Naive thymus-derived CD4-positive, alpha-beta T cell (primary cell): ENCODE measurements at regions of chr16 and their contacts with region 1.

Region 1: GRCh38 chr16:14310519-14310991 is 239.4 kb downstream of the MRTFB start:
- DNase-seq: no peak
- ATAC-seq: no peak
- H3K4me3 ChIP-seq: no peak overlapping the region
- H3K4me3 Mint-ChIP-seq: peak overlapping the region in 2 of 10 donors; percentile 77 to 86
- H3K27ac ChIP-seq: no peak overlapping the region
- H3K27ac Mint-ChIP-seq: peak overlapping the region in 2 of 9 donors; percentile 25 to 26
- H3K4me1 ChIP-seq: peaks cover 0 to 43% of the 10 kb centered on the region in 2 donors
- H3K4me1 Mint-ChIP-seq: peaks cover 6 to 55% (median 45%) of the 10 kb centered on the region in 7 donors
- H3K27me3 ChIP-seq: no peaks in the 10 kb centered on the region
- H3K27me3 Mint-ChIP-seq: peaks cover 0 to 7% (median 0%) of the 10 kb centered on the region in 5 donors

Region 2: GRCh38 chr16:14354551-14355351 is 44.2 kb after region 1 on chr16:
- CTCF ChIA-PET with region 1: no interaction called
- POLR2A ChIA-PET with region 1: interaction called, 3 read pairs
- intact Hi-C with region 1: loop called (anchors 2 to 10 kb)
- DNase-seq: peak in 6 of 9 donors; percentile 25 to 39 (median 26)
- ATAC-seq: peak; percentile 82
- H3K4me3 ChIP-seq: peak overlapping the region; percentile 24
- H3K4me3 Mint-ChIP-seq: peak overlapping the region; percentile 62 to 92 (median 84)
- H3K27ac ChIP-seq: peak overlapping the region; percentile 14
- H3K27ac Mint-ChIP-seq: peak overlapping the region; percentile 11 to 84 (median 77)
- H3K4me1 ChIP-seq: peaks cover 0 to 6% of the 10 kb centered on the region in 2 donors
- H3K4me1 Mint-ChIP-seq: peaks cover 7 to 12% (median 11%) of the 10 kb centered on the region in 7 donors
- H3K27me3 ChIP-seq: no peaks in the 10 kb centered on the region
- H3K27me3 Mint-ChIP-seq: peaks cover 0 to 17% (median 0%) of the 10 kb centered on the region in 5 donors

Region 3: DNA sequence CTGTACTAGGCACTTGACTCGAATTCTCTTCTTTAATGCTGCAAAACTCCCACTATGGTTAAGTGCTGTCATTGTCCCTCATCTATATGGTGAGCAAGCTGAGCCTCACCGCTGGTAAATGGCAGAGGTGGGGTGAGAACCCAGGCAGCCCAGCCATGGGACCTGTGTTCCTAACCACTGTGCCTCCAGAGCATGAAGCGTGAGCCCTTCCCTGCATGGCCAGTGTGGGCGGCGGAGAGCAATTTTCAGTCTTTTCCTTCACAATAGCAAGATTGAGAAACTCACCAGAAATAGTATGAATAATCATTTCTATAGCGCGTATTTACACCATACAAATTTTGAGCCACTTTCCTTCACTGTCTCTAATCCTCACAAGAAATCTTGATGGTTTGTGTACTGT is 331.4 kb after region 1 on chr16:
- CTCF ChIA-PET with region 1: no interaction called
- POLR2A ChIA-PET with region 1: no interaction called
- intact Hi-C with region 1: no loop called
- DNase-seq: no peak
- ATAC-seq: no peak
- H3K4me3 ChIP-seq: no peak overlapping the region
- H3K4me3 Mint-ChIP-seq: no peak overlapping the region
- H3K27ac ChIP-seq: no peak overlapping the region
- H3K27ac Mint-ChIP-seq: peak overlapping the region in 5 of 9 donors; percentile 21 to 65 (median 51)
- H3K4me1 ChIP-seq: no peaks in the 10 kb centered on the region
- H3K4me1 Mint-ChIP-seq: peaks cover 0 to 38% (median 27%) of the 10 kb centered on the region in 7 donors
- H3K27me3 ChIP-seq: no peaks in the 10 kb centered on the region
- H3K27me3 Mint-ChIP-seq: no peaks in the 10 kb centered on the region